K562 (cell line): ENCODE measurements at regions of chr20 and their contacts with region 1.

Region 1: DNA sequence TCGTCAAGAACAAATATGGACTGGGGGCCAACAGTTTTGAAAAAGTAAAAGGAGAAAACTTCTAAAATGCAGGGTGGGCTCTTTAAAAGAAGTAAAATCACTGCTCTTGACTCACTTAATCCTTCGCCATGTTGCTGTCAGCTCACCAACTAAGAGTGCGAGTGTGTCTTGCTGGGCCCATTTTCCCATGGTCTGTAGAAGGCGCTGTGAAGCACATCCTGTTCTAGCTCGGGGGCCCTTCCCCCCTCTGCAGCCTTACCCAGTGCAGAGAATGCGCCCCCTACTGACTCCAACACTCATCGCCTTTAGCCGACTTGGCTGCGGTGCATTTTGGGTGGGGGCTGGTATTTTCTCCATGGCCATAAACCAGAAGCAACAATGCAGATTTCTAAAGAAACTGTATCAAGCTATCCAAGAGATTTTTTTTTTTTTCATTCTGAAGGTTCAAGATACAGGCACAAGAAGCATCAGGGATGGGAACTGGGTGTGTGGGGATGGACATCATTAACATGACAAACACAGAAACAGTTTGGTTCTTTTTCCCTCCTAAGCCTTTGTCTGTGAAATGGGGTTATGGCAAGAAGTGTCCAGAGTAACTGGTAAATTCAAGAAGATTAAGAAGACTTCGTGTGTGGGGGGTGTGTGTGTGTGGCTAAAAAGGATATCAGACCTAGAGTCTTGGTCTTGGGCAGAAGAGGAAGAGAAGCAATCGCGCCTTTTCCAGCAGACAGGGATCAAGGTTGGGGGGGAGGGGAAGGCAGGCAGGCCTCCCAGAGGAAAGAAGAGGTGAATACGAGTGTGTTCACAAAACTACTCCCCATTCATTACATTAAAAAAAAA is 1.7 kb downstream of the ADNP start:
- DNase-seq: peak; percentile 80 to 98 (median 86)
- ATAC-seq: peak; percentile 87
- H3K4me3 ChIP-seq: peak overlapping the region; percentile 71
- H3K27ac ChIP-seq: peak overlapping the region; percentile 88
- H3K4me1 ChIP-seq: peaks cover 12 to 19% of the 10 kb centered on the region in 2 experiments
- H3K27me3 ChIP-seq: no peaks in the 10 kb centered on the region
- CTCF ChIP-seq: peak; percentile 100
- EP300 ChIP-seq: peak; percentile 76
- POLR2A ChIP-seq: peak; percentile 45
- RAD21 ChIP-seq: peak; percentile 87 to 91

Region 2: GRCh38 chr20:50815162-50815989 is 114.1 kb before region 1 on chr20:
- CTCF ChIA-PET with region 1: interaction called, 22 read pairs
- POLR2A ChIA-PET with region 1: interaction called, 5 read pairs
- in situ Hi-C with region 1: loop called (anchors 10 kb)
- intact Hi-C with region 1: loop called (anchors 1 kb)
- DNase-seq: no peak
- ATAC-seq: no peak
- H3K4me3 ChIP-seq: no peak overlapping the region
- H3K27ac ChIP-seq: no peak overlapping the region
- H3K4me1 ChIP-seq: peaks cover 7 to 10% of the 10 kb centered on the region in 2 experiments; a peak in 3 of 5 replicates
- H3K27me3 ChIP-seq: no peaks in the 10 kb centered on the region
- CTCF ChIP-seq: no peak
- EP300 ChIP-seq: no peak
- POLR2A ChIP-seq: no peak
- RAD21 ChIP-seq: no peak

Region 3: DNA sequence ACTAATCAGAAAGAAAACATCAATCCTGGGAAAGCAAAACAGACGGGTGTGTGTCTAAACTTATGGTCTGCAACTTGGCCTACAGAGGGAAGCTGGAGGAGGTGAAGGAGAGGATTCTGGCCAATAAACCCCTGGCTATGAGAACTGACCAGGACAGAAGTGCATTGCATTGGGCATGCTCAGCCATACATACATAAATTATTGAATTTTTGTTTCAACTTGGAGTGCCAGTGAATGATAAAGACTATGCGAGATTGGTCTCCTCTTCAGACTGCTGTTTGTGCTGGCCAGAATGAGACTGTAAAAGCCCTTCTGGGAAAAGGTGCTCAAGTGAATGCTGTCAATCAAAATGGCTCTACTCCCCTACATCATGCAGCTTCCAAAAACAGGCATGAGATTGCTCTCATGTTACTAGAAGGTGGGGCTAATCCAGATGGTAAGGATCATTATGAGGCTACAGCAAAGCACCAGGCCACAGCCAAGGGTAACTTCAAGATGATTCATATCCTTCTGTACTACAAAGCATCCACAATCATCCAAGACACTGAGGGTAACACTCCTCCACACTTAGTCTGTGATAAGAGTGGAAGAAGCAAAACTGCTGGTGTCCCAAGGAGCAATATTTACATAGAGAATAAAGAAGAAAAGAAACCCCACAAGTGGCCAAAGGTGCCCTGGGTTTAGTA is 15.7 kb before region 1 on chr20:
- CTCF ChIA-PET with region 1: interaction called, 3 read pairs
- POLR2A ChIA-PET with region 1: interaction called, 30 read pairs
- in situ Hi-C with region 1: no loop called
- intact Hi-C with region 1: no loop called
- DNase-seq: peak; percentile 27 to 72 (median 38)
- ATAC-seq: peak; percentile 76
- H3K4me3 ChIP-seq: no peak overlapping the region
- H3K27ac ChIP-seq: peak overlapping the region; percentile 9; the same call in 2 of the 3 replicates
- H3K4me1 ChIP-seq: peaks cover 7 to 43% of the 10 kb centered on the region in 2 experiments
- H3K27me3 ChIP-seq: no peaks in the 10 kb centered on the region
- CTCF ChIP-seq: no peak
- EP300 ChIP-seq: no peak
- POLR2A ChIP-seq: no peak
- RAD21 ChIP-seq: no peak

Region 4: GRCh38 chr20:50943069-50943468 is 13.6 kb after region 1 on chr20:
- CTCF ChIA-PET with region 1: no interaction called
- POLR2A ChIA-PET with region 1: interaction called, 30 read pairs
- in situ Hi-C with region 1: no loop called
- intact Hi-C with region 1: no loop called
- DNase-seq: no peak
- ATAC-seq: no peak
- H3K4me3 ChIP-seq: no peak overlapping the region
- H3K27ac ChIP-seq: no peak overlapping the region
- H3K4me1 ChIP-seq: no peaks in the 10 kb centered on the region
- H3K27me3 ChIP-seq: no peaks in the 10 kb centered on the region
- CTCF ChIP-seq: no peak
- EP300 ChIP-seq: no peak
- POLR2A ChIP-seq: no peak
- RAD21 ChIP-seq: no peak

Region 5: GRCh38 chr20:50958615-50959542 is 29.4 kb after region 1 on chr20 and contains the start of gene MOCS3:
- CTCF ChIA-PET with region 1: interaction called, 3 read pairs
- POLR2A ChIA-PET with region 1: interaction called, 17 read pairs
- in situ Hi-C with region 1: no loop called
- intact Hi-C with region 1: no loop called
- DNase-seq: peak; percentile 73 to 93 (median 78)
- ATAC-seq: peak; percentile 82
- H3K4me3 ChIP-seq: peak within 1 kb of the TSS; percentile 74
- H3K27ac ChIP-seq: peak within 1 kb of the TSS; percentile 97
- H3K4me1 ChIP-seq: peaks cover 12 to 19% of the 10 kb centered on the region in 2 experiments; a peak in 4 of 5 replicates
- H3K27me3 ChIP-seq: no peaks in the 10 kb centered on the region
- CTCF ChIP-seq: no peak; a peak in 1 of 6 replicates
- EP300 ChIP-seq: no peak
- POLR2A ChIP-seq: peak; percentile 57; the same call in 1 of the 2 replicates
- RAD21 ChIP-seq: no peak
- polyA plus RNA-seq, gene MOCS3: 0.70 to 1.0 TPM